ENCODE measurements at regions of chr6 and their contacts with region 1.

Region 1: DNA sequence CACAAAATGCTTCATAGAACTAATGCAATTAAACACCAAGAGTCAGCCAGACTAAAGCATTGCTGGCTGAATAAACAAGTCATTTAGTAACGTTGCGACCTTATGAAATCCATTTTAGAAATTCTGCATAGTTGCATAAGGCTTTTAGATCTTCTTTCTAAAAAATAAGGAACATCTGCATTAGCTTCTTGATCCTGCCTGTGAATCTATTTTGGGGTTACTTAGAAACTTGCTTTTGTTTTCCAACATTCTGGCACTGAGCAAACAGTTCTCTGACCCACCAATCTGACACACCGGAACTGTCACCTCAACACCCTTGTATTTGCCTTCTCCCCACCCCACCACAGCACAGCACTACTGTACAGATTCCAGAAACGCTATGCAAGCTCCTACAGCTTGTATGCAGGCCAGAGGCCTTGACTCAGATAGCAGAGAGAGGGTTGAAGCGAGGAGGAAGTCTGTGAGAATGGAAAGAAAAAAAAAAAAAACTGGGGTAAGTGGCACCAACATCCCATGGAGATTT is 55.0 kb downstream of the KIF13A start:
- DNase-seq: peak; percentile 58
- H3K4me3 ChIP-seq: no peak overlapping the region
- H3K27ac ChIP-seq: peak overlapping the region; percentile 96
- H3K4me1 ChIP-seq: peaks cover 50% of the 10 kb centered on the region
- H3K27me3 ChIP-seq: no peaks in the 10 kb centered on the region
- CTCF ChIP-seq: no peak
- POLR2A ChIP-seq: no peak

Region 2: DNA sequence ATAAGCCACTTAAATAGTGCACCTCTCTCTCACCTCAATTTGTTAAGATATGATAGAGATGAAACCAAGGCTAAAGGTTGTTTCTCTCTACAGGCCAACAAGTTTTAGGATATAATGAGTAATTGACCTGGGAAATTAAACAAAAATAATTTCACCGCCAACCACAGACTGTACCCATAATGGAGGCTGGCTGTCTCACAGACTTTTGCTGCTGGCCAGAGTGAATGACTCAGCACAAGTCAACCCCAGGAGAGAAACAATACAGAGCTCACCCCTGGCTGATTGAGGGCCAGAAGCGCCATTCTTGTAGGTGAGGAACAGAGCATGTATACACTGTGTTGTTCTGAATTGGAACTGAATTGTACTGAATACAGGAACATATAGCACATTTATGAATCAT is 439.1 kb before region 1 on chr6:
- CTCF ChIA-PET with region 1: no interaction called
- POLR2A ChIA-PET with region 1: no interaction called
- dilution Hi-C with region 1: no loop called
- intact Hi-C with region 1: loop called (anchors 5 kb)
- DNase-seq: peak; percentile 89
- H3K4me3 ChIP-seq: no peak overlapping the region
- H3K27ac ChIP-seq: peak overlapping the region; percentile 94
- H3K4me1 ChIP-seq: peaks cover 76% of the 10 kb centered on the region
- H3K27me3 ChIP-seq: no peaks in the 10 kb centered on the region
- CTCF ChIP-seq: no peak
- POLR2A ChIP-seq: no peak

Region 3: GRCh38 chr6:17640477-17640917 is 291.9 kb before region 1 on chr6:
- CTCF ChIA-PET with region 1: no interaction called
- POLR2A ChIA-PET with region 1: no interaction called
- dilution Hi-C with region 1: no loop called
- intact Hi-C with region 1: no loop called
- DNase-seq: no peak
- H3K4me3 ChIP-seq: no peak overlapping the region
- H3K27ac ChIP-seq: no peak overlapping the region
- H3K4me1 ChIP-seq: peaks cover 8% of the 10 kb centered on the region
- H3K27me3 ChIP-seq: no peaks in the 10 kb centered on the region
- CTCF ChIP-seq: no peak
- POLR2A ChIP-seq: no peak

Region 4: GRCh38 chr6:17803409-17803808 is 129.0 kb before region 1 on chr6:
- CTCF ChIA-PET with region 1: no interaction called
- POLR2A ChIA-PET with region 1: no interaction called
- dilution Hi-C with region 1: no loop called
- intact Hi-C with region 1: no loop called
- DNase-seq: no peak
- H3K4me3 ChIP-seq: no peak overlapping the region
- H3K27ac ChIP-seq: no peak overlapping the region
- H3K4me1 ChIP-seq: peaks cover under 1% of the 10 kb centered on the region
- H3K27me3 ChIP-seq: no peaks in the 10 kb centered on the region
- CTCF ChIP-seq: no peak
- POLR2A ChIP-seq: no peak

Region 5: GRCh38 chr6:17831135-17831534 is 101.3 kb before region 1 on chr6:
- CTCF ChIA-PET with region 1: no interaction called
- POLR2A ChIA-PET with region 1: no interaction called
- dilution Hi-C with region 1: no loop called
- intact Hi-C with region 1: loop called (anchors 1 kb)
- DNase-seq: peak; percentile 98
- H3K4me3 ChIP-seq: no peak overlapping the region
- H3K27ac ChIP-seq: peak overlapping the region; percentile 96
- H3K4me1 ChIP-seq: peaks cover 23% of the 10 kb centered on the region
- H3K27me3 ChIP-seq: no peaks in the 10 kb centered on the region
- CTCF ChIP-seq: peak in 1 of 2 donors; percentile 7
- POLR2A ChIP-seq: peak; percentile 49

Region 6: DNA sequence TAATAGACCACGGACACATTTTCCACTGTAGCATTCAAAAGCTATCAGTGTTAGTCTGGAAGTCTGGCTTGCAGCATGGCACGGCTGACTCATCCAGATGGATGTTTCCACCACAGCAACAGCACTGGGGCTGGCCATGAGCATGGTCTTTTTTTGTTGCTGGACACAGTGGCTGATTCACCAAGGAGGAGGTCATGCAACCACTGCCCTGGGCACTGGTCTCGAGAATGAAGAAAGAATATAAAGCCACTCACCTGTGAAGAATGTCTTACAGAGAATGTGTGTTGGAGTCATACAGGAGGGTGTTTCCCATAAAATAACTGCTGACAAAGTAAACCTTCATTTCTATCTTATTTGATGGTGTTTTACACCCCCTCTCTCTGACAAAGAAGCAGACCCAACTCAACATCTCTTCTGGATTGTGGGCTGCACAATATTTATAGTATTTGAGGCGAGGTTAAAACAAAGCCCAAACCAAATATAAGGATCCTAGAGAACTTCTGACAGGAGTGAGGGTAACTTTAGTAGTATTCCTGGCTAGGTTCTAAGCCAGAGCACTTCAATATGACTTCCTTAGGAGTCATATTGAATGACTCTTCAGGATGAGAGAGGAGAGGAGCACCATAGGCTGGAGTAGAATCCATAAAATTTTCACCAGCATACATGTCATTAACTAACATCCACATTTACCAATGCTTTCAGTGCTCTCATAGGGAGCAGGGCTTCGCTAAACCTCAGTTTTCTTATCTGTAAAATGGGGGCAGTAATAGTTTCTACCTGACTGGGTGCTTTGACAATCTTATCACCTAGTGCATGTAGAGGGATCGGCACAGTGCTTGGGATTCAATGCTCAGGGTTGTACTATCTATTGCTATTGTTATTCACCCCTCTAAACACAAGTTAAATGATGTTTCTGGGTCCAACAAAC is 66.3 kb before region 1 on chr6:
- CTCF ChIA-PET with region 1: interaction called, 4 read pairs
- POLR2A ChIA-PET with region 1: no interaction called
- dilution Hi-C with region 1: no loop called
- intact Hi-C with region 1: loop called (anchors 2 kb)
- DNase-seq: peak; percentile 97
- H3K4me3 ChIP-seq: no peak overlapping the region
- H3K27ac ChIP-seq: peak overlapping the region; percentile 89
- H3K4me1 ChIP-seq: peaks cover 67% of the 10 kb centered on the region
- H3K27me3 ChIP-seq: no peaks in the 10 kb centered on the region
- CTCF ChIP-seq: no peak
- POLR2A ChIP-seq: no peak

Region 7: GRCh38 chr6:17987576-17988421 is 55.4 kb after region 1 on chr6 and contains the start of gene KIF13A:
- CTCF ChIA-PET with region 1: interaction called, 5 read pairs
- POLR2A ChIA-PET with region 1: interaction called, 5 read pairs
- dilution Hi-C with region 1: no loop called
- intact Hi-C with region 1: loop called (anchors 1 kb)
- DNase-seq: peak; percentile 83
- H3K4me3 ChIP-seq: peak within 1 kb of the TSS; percentile 49 to 93 (median 84)
- H3K27ac ChIP-seq: peak within 1 kb of the TSS; percentile 68
- H3K4me1 ChIP-seq: peaks cover 20% of the 10 kb centered on the region
- H3K27me3 ChIP-seq: no peaks in the 10 kb centered on the region
- CTCF ChIP-seq: peak in 1 of 2 donors; percentile 23
- POLR2A ChIP-seq: peak; percentile 53
- total RNA-seq, gene KIF13A: 55.5 and 65.8 TPM in 2 replicates

Region 8: DNA sequence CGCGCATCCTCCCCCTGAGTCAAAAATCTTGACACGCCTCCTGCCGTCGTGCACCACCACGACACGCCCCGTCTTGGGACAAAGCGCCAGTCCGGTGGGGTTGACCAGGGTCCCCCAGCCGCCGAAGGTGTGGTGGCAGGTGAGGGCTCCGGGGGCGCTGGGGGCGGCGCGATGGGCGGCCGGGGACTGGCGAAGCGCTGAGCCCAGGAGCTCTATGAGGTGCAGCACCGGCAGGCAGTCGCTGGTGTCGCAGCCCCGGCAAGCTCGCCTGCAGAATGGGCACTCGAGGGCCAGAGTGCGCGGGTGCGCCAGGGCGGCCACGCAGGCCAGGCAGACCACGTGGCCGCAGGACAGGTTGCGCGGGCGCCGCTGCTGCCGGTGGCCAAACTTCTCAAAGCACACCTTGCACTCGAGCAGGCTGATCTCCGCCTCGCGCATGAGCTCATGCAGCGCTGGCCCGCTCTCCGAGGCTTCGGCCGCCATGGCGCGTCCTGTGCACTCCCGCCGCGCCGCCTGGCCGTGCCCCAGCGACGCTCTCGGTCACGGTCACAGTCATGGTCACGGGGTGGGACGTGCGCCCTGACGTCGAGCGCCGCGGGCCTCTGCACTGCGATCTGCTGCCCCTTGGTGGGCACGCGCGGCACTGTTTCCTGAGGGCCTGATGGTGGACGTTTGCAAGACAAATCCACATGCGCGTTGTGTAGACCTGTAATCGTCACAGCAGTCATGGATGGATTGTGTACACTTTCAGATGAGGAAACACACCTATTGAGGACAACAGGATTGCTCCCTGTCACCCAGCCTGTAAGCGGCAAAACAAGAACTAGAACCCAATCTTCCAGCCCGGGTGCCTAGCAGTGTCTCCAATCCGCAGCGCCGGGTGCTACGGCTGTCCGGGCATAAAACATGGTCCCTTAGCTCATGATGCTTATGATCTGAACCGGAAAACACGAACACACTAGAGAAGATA is 190.0 kb after region 1 on chr6 and contains the start of gene NHLRC1:
- CTCF ChIA-PET with region 1: no interaction called
- POLR2A ChIA-PET with region 1: no interaction called
- dilution Hi-C with region 1: no loop called
- intact Hi-C with region 1: loop called (anchors 1 kb)
- DNase-seq: peak; percentile 92
- H3K4me3 ChIP-seq: peak within 1 kb of the TSS in 1 of 3 experiments; percentile 35
- H3K27ac ChIP-seq: no peak within 1 kb of the TSS
- H3K4me1 ChIP-seq: peaks cover 5% of the 10 kb centered on the region
- H3K27me3 ChIP-seq: no peaks in the 10 kb centered on the region
- CTCF ChIP-seq: peak; percentile 94 to 97
- POLR2A ChIP-seq: peak; percentile 65
- total RNA-seq, gene NHLRC1: 2.2 and 2.3 TPM in 2 replicates

Region 9: GRCh38 chr6:18262702-18263417 is 330.5 kb after region 1 on chr6:
- CTCF ChIA-PET with region 1: no interaction called
- POLR2A ChIA-PET with region 1: no interaction called
- dilution Hi-C with region 1: no loop called
- intact Hi-C with region 1: no loop called
- DNase-seq: peak; percentile 57
- H3K4me3 ChIP-seq: peak overlapping the region; percentile 63 to 94 (median 90)
- H3K27ac ChIP-seq: peak overlapping the region; percentile 93
- H3K4me1 ChIP-seq: peaks cover 32% of the 10 kb centered on the region
- H3K27me3 ChIP-seq: peaks cover 1 to 2% of the 10 kb centered on the region in 2 experiments
- CTCF ChIP-seq: no peak
- POLR2A ChIP-seq: no peak

Measured in endothelial cell of umbilical vein (primary cell).